ENCODE measurements at regions of chr3 and their contacts with region 1.

Region 1: GRCh38 chr3:179604321-179605078 is at the starts of genes MRPL47 and NDUFB5:
- DNase-seq: peak; percentile 97
- H3K4me3 ChIP-seq: peak within 1 kb of the TSS; percentile 78 to 88 (median 80)
- H3K27ac ChIP-seq: peak within 1 kb of the TSS; percentile 89 to 95 (median 92)
- H3K4me1 ChIP-seq: peaks cover 0 to 44% (median 28%) of the 10 kb centered on the region in 4 donors
- H3K27me3 ChIP-seq: no peaks in the 10 kb centered on the region
- CTCF ChIP-seq: no peak
- EP300 ChIP-seq: no peak
- POLR2A ChIP-seq: peak; percentile 90 to 91
- total RNA-seq, gene MRPL47: 26.0 to 58.5 (median 29.0) TPM
- total RNA-seq, gene NDUFB5: 107 to 216 (median 193) TPM

Region 2: GRCh38 chr3:179653096-179653797 is 48.7 kb after region 1 on chr3:
- intact Hi-C with region 1: loop called (anchors 2 kb)
- DNase-seq: peak; percentile 88
- H3K4me3 ChIP-seq: peak overlapping the region; percentile 74 to 91 (median 88)
- H3K27ac ChIP-seq: peak overlapping the region; percentile 93 to 97 (median 96)
- H3K4me1 ChIP-seq: peaks cover 0 to 16% (median 10%) of the 10 kb centered on the region in 4 donors
- H3K27me3 ChIP-seq: no peaks in the 10 kb centered on the region
- CTCF ChIP-seq: no peak
- EP300 ChIP-seq: no peak
- POLR2A ChIP-seq: no peak

Measured in sigmoid colon (tissue), 7 donors.